Right ventricle myocardium superior (tissue), 1 donor: ENCODE measurements at regions of chr4 and their contacts with region 1.

Region 1: DNA sequence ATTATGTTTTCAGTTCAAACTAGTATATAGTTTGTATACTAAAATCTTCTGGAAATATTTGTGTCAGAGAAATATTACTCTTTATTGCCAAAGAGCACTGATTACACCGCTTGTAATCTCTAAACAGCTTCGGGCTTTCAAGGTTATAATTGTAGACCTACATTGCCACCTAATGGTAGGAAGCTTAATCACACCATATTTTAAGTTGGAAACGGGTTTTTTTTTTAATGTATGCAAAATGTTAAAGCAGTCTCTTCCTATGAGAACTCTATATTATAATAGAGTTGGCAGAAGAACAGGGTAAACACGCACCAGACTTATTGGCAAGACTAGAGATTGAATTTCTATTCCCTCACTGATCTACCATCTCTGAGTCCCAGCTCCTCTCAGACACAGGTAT is 19.5 kb upstream of the NFXL1 start:
- DNase-seq: no peak
- ATAC-seq: peak; percentile 65

Region 2: GRCh38 chr4:47499700-47500099 is 434.1 kb before region 1 on chr4:
- intact Hi-C with region 1: no loop called
- DNase-seq: no peak
- ATAC-seq: no peak

Region 3: DNA sequence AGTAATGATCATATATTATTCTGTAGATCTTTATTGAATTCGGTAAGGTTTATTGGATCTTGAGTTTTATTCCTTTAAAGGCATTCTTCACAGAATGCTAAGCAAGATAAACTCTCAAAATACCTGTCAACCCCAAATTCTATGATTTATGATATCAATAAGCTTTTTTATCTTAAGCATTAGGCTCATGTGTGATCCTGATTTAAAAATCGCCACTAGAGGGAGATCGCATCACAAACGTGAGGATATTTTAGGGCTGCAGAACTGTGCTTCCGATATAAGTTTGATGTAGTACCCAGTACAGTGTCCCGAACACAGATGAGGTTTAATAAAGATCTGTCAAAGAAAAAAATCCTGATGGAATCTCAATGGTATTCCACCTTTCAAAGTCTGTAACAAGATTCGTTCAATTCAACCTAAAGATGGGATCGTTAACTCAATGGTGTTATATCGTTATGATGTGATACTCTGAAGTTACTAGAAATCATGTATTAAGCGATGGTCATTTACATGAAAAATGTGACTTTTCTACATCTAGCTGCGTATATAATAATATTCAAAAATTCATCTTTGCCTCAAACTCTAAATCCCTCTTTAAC is 264.9 kb before region 1 on chr4:
- intact Hi-C with region 1: loop called (anchors 5 kb)
- DNase-seq: no peak
- ATAC-seq: peak; percentile 80